ENCODE measurements at regions of chr4 and their contacts with region 1.

Region 1: DNA sequence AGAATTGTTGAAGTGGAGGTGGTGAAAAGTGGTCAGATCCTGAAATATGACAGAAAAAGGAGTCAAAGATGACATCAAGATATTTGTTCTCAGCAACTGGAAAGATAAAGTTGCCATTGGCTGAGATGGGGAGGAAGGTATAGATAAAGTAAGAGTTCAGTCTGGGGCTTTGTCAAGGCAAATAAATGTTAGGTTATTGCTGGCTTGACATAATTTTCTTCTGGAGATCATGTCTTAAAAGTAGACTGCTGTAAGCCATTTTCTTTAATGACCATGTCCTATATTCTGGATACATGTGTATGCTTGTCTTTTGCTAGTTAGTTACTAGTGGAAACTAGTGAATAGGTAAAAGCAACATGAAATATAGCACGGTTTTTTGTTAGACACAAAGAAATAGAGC is 5.6 kb downstream of the USP53 start:
- DNase-seq: no peak
- ATAC-seq: no peak
- H3K4me3 Mint-ChIP-seq: no peak overlapping the region
- H3K27ac Mint-ChIP-seq: no peak overlapping the region
- H3K4me1 Mint-ChIP-seq: peaks cover 29% of the 10 kb centered on the region
- H3K27me3 Mint-ChIP-seq: no peaks in the 10 kb centered on the region
- CTCF ChIP-seq: no peak

Region 2: GRCh38 chr4:119238068-119238722 is 20.1 kb after region 1 on chr4:
- CTCF ChIA-PET with region 1: no interaction called
- POLR2A ChIA-PET with region 1: interaction called, 3 read pairs
- intact Hi-C with region 1: loop called (anchors 2 kb)
- DNase-seq: no peak
- ATAC-seq: peak; percentile 66
- H3K4me3 Mint-ChIP-seq: no peak overlapping the region
- H3K27ac Mint-ChIP-seq: peak overlapping the region; percentile 38
- H3K4me1 Mint-ChIP-seq: peaks cover 24% of the 10 kb centered on the region
- H3K27me3 Mint-ChIP-seq: no peaks in the 10 kb centered on the region
- CTCF ChIP-seq: no peak